ENCODE measurements at regions of chr2 and their contacts with region 1.

Region 1: DNA sequence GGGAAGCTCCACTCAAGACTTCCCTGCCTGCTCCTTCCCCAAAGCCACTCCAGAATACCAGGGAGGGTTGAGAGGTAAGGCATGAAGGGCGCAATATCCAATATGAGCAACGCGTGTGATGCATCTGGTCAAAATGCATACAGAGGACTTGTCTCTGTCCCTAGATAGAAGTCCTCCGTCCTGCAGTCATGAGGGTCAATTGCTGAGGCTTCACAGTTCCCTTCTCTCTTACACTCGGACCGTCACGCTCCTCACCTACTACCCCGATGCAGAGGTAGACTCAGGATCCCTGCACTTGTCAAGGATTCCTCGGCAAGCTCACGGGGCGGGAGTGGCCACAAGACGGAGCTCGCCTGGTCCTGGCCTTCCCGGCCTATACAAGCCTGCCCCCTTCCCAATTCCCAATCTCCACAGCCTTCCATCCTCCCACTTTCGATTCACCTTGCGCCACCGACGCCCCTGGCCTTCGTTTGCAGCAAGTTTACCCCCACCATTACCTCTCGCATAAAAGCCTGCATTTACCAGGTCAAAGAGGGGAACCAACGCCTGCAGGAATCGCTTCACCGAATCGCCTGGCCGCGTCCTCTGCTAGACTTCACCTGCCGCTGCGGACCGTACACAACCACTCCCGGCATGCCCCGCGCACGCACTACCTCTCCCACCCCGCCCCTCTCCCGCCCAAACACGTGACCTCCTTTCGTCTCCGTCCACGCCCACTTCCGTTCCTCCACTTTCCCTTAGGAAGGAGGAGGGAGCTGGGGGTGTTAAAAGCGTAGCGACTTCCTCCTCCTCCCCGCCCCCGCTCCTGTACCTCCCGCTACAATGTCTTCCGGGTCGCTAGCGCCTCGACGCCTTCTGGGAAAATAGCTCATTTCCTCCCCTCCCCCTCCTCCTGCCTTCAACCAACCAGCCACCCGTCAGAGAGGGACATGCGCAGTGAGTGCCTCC is at the start of gene ORC4:
- DNase-seq: peak; percentile 91 to 100 (median 96)
- ATAC-seq: peak; percentile 86
- H3K4me3 ChIP-seq: peak within 1 kb of the TSS; percentile 96 to 97
- H3K4me3 Mint-ChIP-seq: peak within 1 kb of the TSS; percentile 100
- H3K27ac ChIP-seq: peak within 1 kb of the TSS; percentile 85 to 94
- H3K27ac Mint-ChIP-seq: peak within 1 kb of the TSS; percentile 98
- H3K4me1 ChIP-seq: peaks cover 47% of the 10 kb centered on the region
- H3K4me1 Mint-ChIP-seq: peaks cover 73% of the 10 kb centered on the region
- H3K27me3 ChIP-seq: no peaks in the 10 kb centered on the region
- H3K27me3 Mint-ChIP-seq: no peaks in the 10 kb centered on the region
- CTCF ChIP-seq: no peak
- total RNA-seq, gene ORC4: 28.5 to 29.9 TPM

Region 2: GRCh38 chr2:147711031-147711430 is 309.4 kb before region 1 on chr2:
- CTCF ChIA-PET with region 1: no interaction called
- POLR2A ChIA-PET with region 1: no interaction called
- intact Hi-C with region 1: no loop called
- DNase-seq: no peak
- ATAC-seq: no peak
- H3K4me3 ChIP-seq: no peak overlapping the region
- H3K4me3 Mint-ChIP-seq: no peak overlapping the region
- H3K27ac ChIP-seq: no peak overlapping the region
- H3K27ac Mint-ChIP-seq: no peak overlapping the region
- H3K4me1 ChIP-seq: no peaks in the 10 kb centered on the region
- H3K4me1 Mint-ChIP-seq: no peaks in the 10 kb centered on the region
- H3K27me3 ChIP-seq: no peaks in the 10 kb centered on the region
- H3K27me3 Mint-ChIP-seq: peaks cover 2% of the 10 kb centered on the region
- CTCF ChIP-seq: no peak

Region 3: GRCh38 chr2:148032215-148032614 is 11.8 kb after region 1 on chr2:
- CTCF ChIA-PET with region 1: no interaction called
- POLR2A ChIA-PET with region 1: interaction called, 11 read pairs
- intact Hi-C with region 1: no loop called
- DNase-seq: no peak
- ATAC-seq: no peak
- H3K4me3 ChIP-seq: no peak overlapping the region
- H3K4me3 Mint-ChIP-seq: no peak overlapping the region
- H3K27ac ChIP-seq: no peak overlapping the region
- H3K27ac Mint-ChIP-seq: no peak overlapping the region
- H3K4me1 ChIP-seq: no peaks in the 10 kb centered on the region
- H3K4me1 Mint-ChIP-seq: peaks cover 18% of the 10 kb centered on the region
- H3K27me3 ChIP-seq: no peaks in the 10 kb centered on the region
- H3K27me3 Mint-ChIP-seq: no peaks in the 10 kb centered on the region
- CTCF ChIP-seq: no peak

Region 4: DNA sequence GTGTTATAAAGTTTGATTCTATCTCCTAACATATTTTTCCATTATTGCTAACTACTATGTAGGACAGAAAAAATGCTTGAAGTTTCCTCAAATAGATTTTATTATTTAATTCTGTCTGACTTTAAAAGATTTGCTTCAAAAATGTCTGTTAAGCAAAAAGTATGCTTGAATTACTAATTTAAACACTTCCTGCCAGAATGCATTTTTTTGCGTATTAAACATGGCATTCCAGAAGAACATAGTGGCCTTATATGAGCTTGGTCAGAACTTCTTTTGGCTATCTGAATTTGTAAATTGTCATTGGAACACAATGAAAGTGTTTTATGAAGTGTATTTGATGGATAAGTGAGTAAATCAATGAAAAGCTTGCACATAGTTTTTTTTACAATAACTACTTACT is 38.3 kb after region 1 on chr2:
- CTCF ChIA-PET with region 1: no interaction called
- POLR2A ChIA-PET with region 1: no interaction called
- intact Hi-C with region 1: loop called in 1 of 2 experiments (anchors 5 kb)
- DNase-seq: no peak
- ATAC-seq: no peak
- H3K4me3 ChIP-seq: no peak overlapping the region
- H3K4me3 Mint-ChIP-seq: no peak overlapping the region
- H3K27ac ChIP-seq: no peak overlapping the region
- H3K27ac Mint-ChIP-seq: no peak overlapping the region
- H3K4me1 ChIP-seq: no peaks in the 10 kb centered on the region
- H3K4me1 Mint-ChIP-seq: peaks cover 6% of the 10 kb centered on the region
- H3K27me3 ChIP-seq: no peaks in the 10 kb centered on the region
- H3K27me3 Mint-ChIP-seq: no peaks in the 10 kb centered on the region
- CTCF ChIP-seq: no peak

Region 5: DNA sequence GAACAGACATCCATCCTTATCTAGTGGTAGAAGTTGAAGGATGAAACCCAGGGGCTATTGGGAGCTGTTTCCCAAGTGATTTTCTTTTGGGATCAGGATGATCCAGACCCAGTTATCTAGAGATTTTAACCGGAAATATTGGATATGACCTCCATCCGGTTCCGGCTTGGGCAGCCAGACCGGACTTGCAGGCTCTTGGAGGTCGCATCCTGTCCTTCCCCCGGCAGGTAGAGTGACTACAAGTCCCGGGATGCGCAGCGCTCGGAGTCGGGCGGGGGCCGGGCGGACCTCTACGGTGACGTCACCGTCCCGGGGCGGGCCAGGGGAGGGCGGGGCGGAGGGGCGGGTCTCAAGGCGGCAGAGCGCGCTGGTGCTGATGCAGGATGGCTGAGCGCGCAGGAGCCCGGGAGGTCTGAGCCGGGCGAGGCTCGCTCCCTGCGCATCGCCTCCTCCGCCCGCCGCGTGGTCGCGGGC is 854.5 kb after region 1 on chr2 and contains the start of gene KIF5C:
- CTCF ChIA-PET with region 1: no interaction called
- POLR2A ChIA-PET with region 1: interaction called, 3 read pairs
- intact Hi-C with region 1: loop called (anchors 2 kb)
- DNase-seq: peak; percentile 77 to 94 (median 87)
- ATAC-seq: peak; percentile 87
- H3K4me3 ChIP-seq: peak within 1 kb of the TSS; percentile 49 to 52
- H3K4me3 Mint-ChIP-seq: peak within 1 kb of the TSS; percentile 86
- H3K27ac ChIP-seq: no peak within 1 kb of the TSS
- H3K27ac Mint-ChIP-seq: peak within 1 kb of the TSS; percentile 41
- H3K4me1 ChIP-seq: peaks cover 12% of the 10 kb centered on the region
- H3K4me1 Mint-ChIP-seq: peaks cover 18% of the 10 kb centered on the region
- H3K27me3 ChIP-seq: peaks cover 0 to 5% of the 10 kb centered on the region in 2 experiments
- H3K27me3 Mint-ChIP-seq: peaks cover 16% of the 10 kb centered on the region
- CTCF ChIP-seq: no peak
- total RNA-seq, gene KIF5C: 6.4 to 6.5 TPM

Region 6: GRCh38 chr2:148906124-148906523 is 885.7 kb after region 1 on chr2:
- CTCF ChIA-PET with region 1: no interaction called
- POLR2A ChIA-PET with region 1: no interaction called
- intact Hi-C with region 1: no loop called
- DNase-seq: no peak
- ATAC-seq: no peak
- H3K4me3 ChIP-seq: no peak overlapping the region
- H3K4me3 Mint-ChIP-seq: no peak overlapping the region
- H3K27ac ChIP-seq: no peak overlapping the region
- H3K27ac Mint-ChIP-seq: no peak overlapping the region
- H3K4me1 ChIP-seq: no peaks in the 10 kb centered on the region
- H3K4me1 Mint-ChIP-seq: no peaks in the 10 kb centered on the region
- H3K27me3 ChIP-seq: no peaks in the 10 kb centered on the region
- H3K27me3 Mint-ChIP-seq: peaks cover 4% of the 10 kb centered on the region
- CTCF ChIP-seq: no peak

Measured in CD8-positive, alpha-beta T cell (primary cell).